ENCODE measurements at regions of chr2 and their contacts with region 1.

Region 1: DNA sequence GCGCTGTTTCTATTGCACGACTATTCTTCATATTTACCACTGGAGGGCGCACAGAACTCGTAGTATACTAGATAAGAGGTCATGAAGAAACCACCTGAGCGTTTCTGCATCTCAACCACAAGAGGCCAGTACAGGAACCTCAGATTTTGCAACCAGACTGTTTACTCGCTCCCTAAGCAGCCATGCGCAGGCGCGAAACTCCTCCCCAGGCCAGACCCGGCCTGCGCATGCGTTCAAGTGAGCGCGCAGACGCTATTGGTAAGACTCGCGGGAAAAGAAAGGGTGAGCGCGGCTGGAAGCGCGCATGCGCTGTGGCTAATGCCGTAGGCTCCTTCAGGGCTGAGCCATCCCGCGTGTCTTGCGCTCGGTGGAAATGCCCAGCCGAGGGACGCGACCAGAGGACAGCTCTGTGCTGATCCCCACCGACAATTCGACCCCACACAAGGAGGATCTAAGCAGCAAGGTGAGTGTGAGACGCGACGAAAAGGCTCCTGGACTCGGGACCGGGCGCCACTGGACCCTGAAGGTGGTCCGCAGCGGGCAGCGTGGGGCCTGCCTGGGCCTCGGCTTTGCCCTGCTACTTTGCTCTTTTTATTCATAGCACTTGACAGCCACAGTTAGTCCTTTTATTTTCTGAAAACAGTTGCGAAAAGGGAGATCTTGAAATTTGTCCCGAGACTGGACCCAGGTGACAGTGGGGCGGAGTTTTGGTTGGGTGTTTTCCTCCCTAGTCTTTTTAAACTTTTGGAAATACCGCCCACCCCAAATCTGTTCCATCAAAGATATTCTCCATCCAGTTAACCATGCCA is at the start of gene ASNSD1:
- DNase-seq: peak; percentile 97 to 100
- H3K4me3 ChIP-seq: peak within 1 kb of the TSS; percentile 52 to 99 (median 94)
- H3K27ac ChIP-seq: peak within 1 kb of the TSS; percentile 87; the same call in 1 of the 2 replicates
- H3K4me1 ChIP-seq: peaks cover 0 to 5% (median 0%) of the 10 kb centered on the region in 4 experiments; a peak in 2 of 7 replicates
- H3K27me3 ChIP-seq: no peaks in the 10 kb centered on the region
- CTCF ChIP-seq: peak; percentile 14 to 99 (median 96)
- EP300 ChIP-seq: no peak
- POLR2A ChIP-seq: peak; percentile 89 to 95
- RAD21 ChIP-seq: peak; percentile 88 to 94
- total RNA-seq, gene ASNSD1: 37.7 and 44.8 TPM in 2 replicates

Region 2: GRCh38 chr2:189633392-189633811 is 27.9 kb before region 1 on chr2:
- CTCF ChIA-PET with region 1: interaction called, 16 read pairs
- POLR2A ChIA-PET with region 1: no interaction called
- DNase-seq: no peak
- H3K4me3 ChIP-seq: no peak overlapping the region
- H3K27ac ChIP-seq: no peak overlapping the region
- H3K4me1 ChIP-seq: no peaks in the 10 kb centered on the region; a peak in 1 of 7 replicates
- H3K27me3 ChIP-seq: no peaks in the 10 kb centered on the region
- CTCF ChIP-seq: peak in 2 of 3 experiments; percentile 33 to 40; a peak in 3 of 4 replicates
- EP300 ChIP-seq: no peak
- POLR2A ChIP-seq: no peak
- RAD21 ChIP-seq: peak; percentile 43

Region 3: GRCh38 chr2:189641590-189641989 is 19.8 kb before region 1 on chr2:
- CTCF ChIA-PET with region 1: interaction called, 12 read pairs
- POLR2A ChIA-PET with region 1: no interaction called
- DNase-seq: no peak
- H3K4me3 ChIP-seq: 0 out of 8 replicates have a peak overlapping the region, but pooled peaks of 1 of the 4 experiments have one; percentile 4
- H3K27ac ChIP-seq: no peak overlapping the region
- H3K4me1 ChIP-seq: peaks cover 0 to 3% (median 2%) of the 10 kb centered on the region in 4 experiments; a peak in 3 of 7 replicates
- H3K27me3 ChIP-seq: no peaks in the 10 kb centered on the region
- CTCF ChIP-seq: no peak
- EP300 ChIP-seq: no peak
- POLR2A ChIP-seq: no peak
- RAD21 ChIP-seq: no peak

Region 4: DNA sequence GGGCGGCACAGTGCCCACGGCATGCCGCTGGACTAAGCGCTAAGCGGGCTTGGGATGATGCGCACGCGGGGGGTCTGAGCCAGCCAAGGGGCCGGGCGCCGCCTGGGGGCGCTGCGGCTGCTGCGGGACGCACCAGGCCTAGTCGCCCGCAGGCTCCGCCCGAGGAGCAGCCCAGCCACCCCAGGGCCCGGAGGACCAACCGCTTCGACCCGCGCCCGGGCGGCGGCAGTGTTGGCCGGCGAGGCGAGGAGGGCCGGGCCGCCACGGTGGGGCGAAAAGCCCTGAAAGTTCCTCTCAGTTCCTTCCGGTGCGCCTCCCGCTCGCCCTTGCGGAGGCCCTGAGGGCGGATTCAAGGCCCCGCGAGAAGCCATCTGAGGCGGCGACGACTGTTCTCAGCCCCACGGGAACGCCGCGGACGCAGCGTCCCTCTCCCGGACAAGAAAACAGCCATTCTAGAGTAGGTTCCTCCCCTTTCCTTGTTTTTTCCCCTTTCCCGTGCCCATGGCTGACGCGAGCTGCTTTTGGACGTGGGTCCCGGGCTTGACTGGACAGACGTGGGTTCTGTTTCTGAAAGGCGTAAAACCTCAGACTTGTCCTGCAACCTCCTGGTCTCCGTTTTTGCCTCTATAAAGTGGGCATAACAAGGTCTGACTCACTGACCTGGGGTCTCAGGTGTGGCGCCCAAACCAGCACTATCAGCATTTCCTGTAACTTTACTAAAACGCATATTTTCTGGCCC is 13.2 kb after region 1 on chr2 and contains the start of gene ANKAR:
- CTCF ChIA-PET with region 1: interaction called, 82 read pairs
- POLR2A ChIA-PET with region 1: interaction called, 12 read pairs
- DNase-seq: peak; percentile 83 to 96
- H3K4me3 ChIP-seq: peak within 1 kb of the TSS; percentile 72 to 87 (median 78)
- H3K27ac ChIP-seq: peak within 1 kb of the TSS; percentile 69; the same call in 1 of the 2 replicates
- H3K4me1 ChIP-seq: peaks cover 0 to 4% (median 0%) of the 10 kb centered on the region in 4 experiments; a peak in 3 of 7 replicates
- H3K27me3 ChIP-seq: no peaks in the 10 kb centered on the region; a peak in 1 of 7 replicates
- CTCF ChIP-seq: peak; percentile 80 to 92 (median 89)
- EP300 ChIP-seq: no peak; a peak in 1 of 3 replicates
- POLR2A ChIP-seq: peak; percentile 58 to 81; a peak in 2 of 3 replicates
- RAD21 ChIP-seq: peak; percentile 52 to 64
- total RNA-seq, gene ANKAR: 1.5 and 1.7 TPM in 2 replicates

Region 5: DNA sequence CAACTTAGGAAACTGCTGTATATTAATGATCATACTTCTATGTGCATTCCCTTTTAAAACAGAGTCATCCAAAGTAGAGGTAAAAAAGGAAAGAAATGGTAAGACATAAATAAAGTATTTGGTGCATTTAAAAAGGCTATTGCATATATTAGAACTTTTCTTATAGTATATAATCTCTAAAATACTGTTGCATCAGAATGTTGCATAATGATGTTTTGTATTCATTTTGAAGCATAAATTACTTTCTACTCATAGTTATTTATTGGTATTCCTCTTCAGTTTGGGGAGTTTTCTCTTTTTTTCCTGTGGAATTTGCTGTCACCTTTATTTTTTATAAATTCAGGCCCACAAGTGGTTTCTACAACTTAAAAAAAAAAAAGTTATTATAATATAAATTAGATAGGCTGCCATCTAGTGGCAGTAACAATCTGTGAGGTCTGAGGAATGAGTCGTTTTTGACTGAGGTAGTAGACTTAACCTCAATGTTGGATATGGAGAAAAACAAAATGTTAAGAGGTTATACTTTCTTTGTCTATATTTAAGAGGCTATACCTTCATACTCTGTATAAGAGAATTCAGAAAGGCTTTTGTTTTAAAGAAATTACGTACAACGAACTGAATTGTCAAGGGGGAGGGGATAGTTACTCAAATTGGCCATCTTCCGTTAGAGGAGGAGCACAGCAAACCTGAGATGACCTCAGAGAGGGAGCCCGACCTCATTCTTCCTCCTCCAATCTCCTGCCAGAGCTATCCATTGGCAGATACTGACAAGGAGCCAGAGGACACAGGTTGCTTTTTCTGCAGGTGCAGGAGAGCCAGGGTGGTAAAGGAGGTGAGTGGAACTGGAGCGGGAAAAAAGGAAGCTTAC is 36.9 kb after region 1 on chr2:
- CTCF ChIA-PET with region 1: interaction called, 21 read pairs
- POLR2A ChIA-PET with region 1: no interaction called
- DNase-seq: peak in 1 of 2 experiments; percentile 44
- H3K4me3 ChIP-seq: peak overlapping the region in 3 of 4 experiments; percentile 6 to 59 (median 12); a peak in 4 of 8 replicates
- H3K27ac ChIP-seq: no peak overlapping the region
- H3K4me1 ChIP-seq: no peaks in the 10 kb centered on the region
- H3K27me3 ChIP-seq: no peaks in the 10 kb centered on the region
- CTCF ChIP-seq: no peak; a peak in 1 of 4 replicates
- EP300 ChIP-seq: no peak
- POLR2A ChIP-seq: no peak
- RAD21 ChIP-seq: no peak

Region 6: DNA sequence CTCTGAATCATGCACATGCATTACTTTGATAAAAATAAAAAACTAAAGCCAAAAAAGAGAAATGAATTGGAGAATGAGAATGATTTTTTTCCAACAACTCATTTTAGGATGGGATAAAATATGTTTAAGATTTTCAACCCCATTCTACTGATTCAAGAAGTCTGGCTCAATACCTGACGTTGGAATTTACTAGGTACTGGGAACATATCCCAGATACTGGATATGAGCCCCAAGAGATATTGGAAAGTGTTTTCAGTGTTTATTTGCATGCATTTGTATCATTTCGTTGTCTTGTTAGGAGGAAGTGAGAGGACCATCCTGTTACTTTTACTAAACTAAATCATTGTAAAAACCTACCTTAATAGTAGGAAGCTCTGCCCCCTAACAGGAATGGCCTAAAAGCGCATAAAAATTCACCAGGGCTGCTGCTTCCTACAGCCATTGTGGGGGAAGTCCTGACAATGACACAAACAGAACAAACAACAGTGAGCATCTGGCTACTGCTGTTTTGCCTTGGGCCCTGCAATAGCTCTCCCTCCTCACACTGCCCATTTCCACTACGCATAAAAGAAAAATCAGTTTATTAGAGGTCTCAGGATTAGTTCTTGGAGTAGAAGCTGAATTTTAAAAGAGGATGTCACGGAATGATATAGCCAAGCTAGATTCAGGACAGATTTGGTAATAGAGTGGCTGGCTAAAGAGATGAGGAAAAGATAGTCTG is 48.3 kb after region 1 on chr2:
- CTCF ChIA-PET with region 1: interaction called, 10 read pairs
- POLR2A ChIA-PET with region 1: no interaction called
- DNase-seq: no peak
- H3K4me3 ChIP-seq: no peak overlapping the region
- H3K27ac ChIP-seq: no peak overlapping the region
- H3K4me1 ChIP-seq: no peaks in the 10 kb centered on the region; a peak in 1 of 7 replicates
- H3K27me3 ChIP-seq: peaks cover 0 to 1% (median 0%) of the 10 kb centered on the region in 4 experiments; a peak in 1 of 7 replicates
- CTCF ChIP-seq: no peak
- EP300 ChIP-seq: no peak
- POLR2A ChIP-seq: no peak
- RAD21 ChIP-seq: no peak

Region 7: DNA sequence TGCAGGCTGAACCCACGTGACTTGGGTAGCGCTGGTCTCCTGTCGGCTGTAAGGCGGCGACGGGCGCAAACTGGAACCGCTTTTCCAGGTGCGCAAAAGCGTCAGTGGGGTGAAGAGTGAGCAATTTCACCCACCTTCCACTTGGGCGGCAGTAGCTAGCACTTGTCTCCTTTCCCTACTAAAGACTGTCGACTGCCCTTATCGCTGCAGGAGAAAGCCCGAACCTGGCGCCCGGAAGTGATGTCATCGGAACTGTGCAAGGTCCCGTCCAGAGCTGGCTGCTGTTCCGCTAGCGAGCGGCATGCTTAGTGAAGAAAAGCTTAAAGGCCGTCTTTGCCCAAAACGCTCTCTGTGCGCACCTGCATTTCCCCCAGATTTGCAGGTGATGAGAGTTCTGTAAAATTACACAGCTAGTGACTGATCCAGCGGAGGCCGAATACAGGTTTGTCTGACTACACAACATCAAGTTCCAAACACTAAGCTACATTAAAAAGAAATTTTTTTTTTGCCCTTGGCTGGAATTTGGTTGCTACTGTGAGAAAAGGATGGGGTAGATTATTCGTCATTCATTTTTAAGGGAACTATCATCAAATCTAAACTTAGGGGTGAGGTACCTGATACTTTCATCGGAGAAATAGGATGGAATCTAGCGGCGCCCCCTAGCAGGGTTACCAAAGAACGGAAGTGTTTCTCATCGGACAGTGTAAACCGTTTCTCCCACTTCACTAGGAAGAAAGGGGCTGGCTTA is 101.4 kb after region 1 on chr2 and contains the start of gene OSGEPL1:
- CTCF ChIA-PET with region 1: interaction called, 13 read pairs
- POLR2A ChIA-PET with region 1: interaction called, 3 read pairs
- DNase-seq: peak; percentile 87 to 91
- H3K4me3 ChIP-seq: peak within 1 kb of the TSS; percentile 81 to 91 (median 88)
- H3K27ac ChIP-seq: peak within 1 kb of the TSS; percentile 85
- H3K4me1 ChIP-seq: no peaks in the 10 kb centered on the region; a peak in 1 of 7 replicates
- H3K27me3 ChIP-seq: no peaks in the 10 kb centered on the region
- CTCF ChIP-seq: peak; percentile 15 to 68 (median 36); a peak in 3 of 4 replicates
- EP300 ChIP-seq: no peak
- POLR2A ChIP-seq: peak; percentile 49 to 95
- RAD21 ChIP-seq: peak in 1 of 2 experiments; percentile 9; a peak in 1 of 4 replicates
- total RNA-seq, gene OSGEPL1: 11.8 and 15.7 TPM in 2 replicates

Measured in H1 (cell line).